B cell (primary cell): ENCODE measurements at regions of chr2 and their contacts with region 1.

Region 1: GRCh38 chr2:161199912-161200701 is 39.9 kb downstream of the TANK start:
- DNase-seq: peak; percentile 51
- ATAC-seq: peak; percentile 76
- H3K4me3 ChIP-seq: no peak overlapping the region
- H3K4me3 Mint-ChIP-seq: peak overlapping the region; percentile 70
- H3K27ac ChIP-seq: peak overlapping the region in 1 of 2 donors; percentile 59
- H3K27ac Mint-ChIP-seq: peak overlapping the region; percentile 67
- H3K4me1 ChIP-seq: peaks cover 11 to 18% of the 10 kb centered on the region in 2 donors
- H3K4me1 Mint-ChIP-seq: peaks cover 53% of the 10 kb centered on the region
- H3K27me3 ChIP-seq: no peaks in the 10 kb centered on the region
- H3K27me3 Mint-ChIP-seq: no peaks in the 10 kb centered on the region
- CTCF ChIP-seq: no peak

Region 2: GRCh38 chr2:161172901-161173540 is 27.1 kb before region 1 on chr2:
- CTCF ChIA-PET with region 1: no interaction called
- POLR2A ChIA-PET with region 1: no interaction called
- intact Hi-C with region 1: loop called (anchors 2 kb)
- DNase-seq: no peak
- ATAC-seq: no peak
- H3K4me3 ChIP-seq: no peak overlapping the region
- H3K4me3 Mint-ChIP-seq: peak overlapping the region; percentile 21
- H3K27ac ChIP-seq: no peak overlapping the region
- H3K27ac Mint-ChIP-seq: peak overlapping the region; percentile 15
- H3K4me1 ChIP-seq: peaks cover 69 to 70% of the 10 kb centered on the region in 2 donors
- H3K4me1 Mint-ChIP-seq: peaks cover 86% of the 10 kb centered on the region
- H3K27me3 ChIP-seq: no peaks in the 10 kb centered on the region
- H3K27me3 Mint-ChIP-seq: no peaks in the 10 kb centered on the region
- CTCF ChIP-seq: no peak